ENCODE measurements at regions of chr9 and their contacts with region 1.

Region 1: DNA sequence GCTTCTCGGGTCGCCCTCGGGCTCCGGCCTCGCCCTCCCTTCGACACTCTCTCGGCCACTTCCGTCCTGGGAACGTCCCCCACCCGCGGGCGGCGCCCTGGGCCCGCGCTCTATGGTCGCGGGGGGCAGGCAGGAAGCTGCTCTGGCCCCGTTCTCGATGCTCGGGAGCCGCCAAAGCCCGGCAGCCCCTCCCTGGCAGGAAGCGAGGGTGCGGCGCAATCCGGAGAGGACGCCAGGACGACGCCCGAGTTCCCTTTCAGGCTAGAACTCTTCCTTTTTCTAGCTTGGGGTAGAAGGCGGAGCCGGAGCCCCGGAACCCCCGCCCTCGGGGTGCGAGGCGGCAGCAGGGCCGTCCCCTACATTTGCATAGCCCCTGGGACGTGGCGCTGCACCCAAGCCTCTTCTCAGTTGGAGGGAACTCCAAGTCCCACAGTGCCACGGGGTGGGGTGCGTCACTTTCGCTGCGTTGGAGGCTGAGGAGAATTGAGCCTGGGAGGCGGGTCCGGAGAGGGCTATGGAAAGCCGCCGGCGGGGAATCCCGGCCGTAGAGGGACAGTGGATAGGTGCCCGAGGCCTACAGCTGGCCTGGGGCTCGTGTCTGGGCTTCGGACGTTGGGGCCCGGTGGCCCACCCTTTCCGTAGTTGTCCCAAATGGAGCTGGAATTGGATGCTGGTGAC is at the starts of genes CREB3 and TLN1:
- DNase-seq: peak; percentile 94
- H3K4me3 Mint-ChIP-seq: no peak within 1 kb of the TSS
- H3K27ac Mint-ChIP-seq: no peak within 1 kb of the TSS
- H3K4me1 Mint-ChIP-seq: no peaks in the 10 kb centered on the region
- H3K27me3 Mint-ChIP-seq: no peaks in the 10 kb centered on the region
- CTCF ChIP-seq: no peak
- total RNA-seq, gene CREB3: 26.5 and 29.4 TPM in 2 replicates
- total RNA-seq, gene TLN1: 91.1 and 98.7 TPM in 2 replicates

Region 2: DNA sequence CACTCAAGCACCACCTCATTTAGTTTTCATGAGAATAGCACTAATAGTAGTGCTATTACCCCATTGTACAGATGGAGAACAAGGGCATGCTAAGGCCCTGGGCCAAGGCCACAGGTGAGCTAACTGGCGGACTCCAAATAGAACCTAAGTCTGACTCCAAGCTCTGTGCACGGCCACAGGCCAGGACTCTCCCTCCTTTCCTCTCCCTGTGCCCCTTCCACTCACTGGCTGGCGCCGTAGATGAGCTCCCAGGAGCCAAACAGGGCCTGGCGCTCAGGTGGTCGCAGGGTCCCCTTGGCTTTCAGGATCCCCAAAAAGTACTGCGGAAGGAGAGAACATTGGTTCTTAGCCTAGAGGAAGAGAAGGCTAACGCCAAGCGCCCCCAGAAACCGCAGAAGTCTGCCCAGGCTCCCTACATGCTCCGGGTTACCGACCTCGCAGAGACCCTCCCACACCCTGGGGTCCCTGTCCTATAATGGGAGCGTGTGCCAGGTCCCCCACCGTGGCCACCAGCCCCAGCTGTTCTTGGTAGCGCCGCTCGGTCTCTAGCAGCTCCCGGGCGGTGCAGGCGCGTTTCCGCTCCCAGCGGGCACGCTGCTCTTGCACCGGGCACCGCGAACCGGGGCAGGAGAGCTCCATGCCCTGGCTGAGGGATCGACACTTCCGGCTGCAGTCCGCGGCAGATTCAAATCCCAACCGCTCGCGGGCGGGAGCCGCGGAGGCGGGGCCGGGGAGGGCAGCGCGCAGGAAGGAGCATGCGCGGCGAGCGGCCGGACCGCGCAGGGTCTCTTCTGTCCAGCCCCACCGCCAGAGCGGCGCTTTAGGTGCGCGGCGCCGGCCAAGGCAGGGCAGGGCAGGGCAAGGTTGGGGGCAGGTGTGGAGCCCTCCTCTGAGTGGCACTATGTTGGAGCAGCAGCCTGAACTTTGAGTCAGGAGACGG is 67.5 kb before region 1 on chr9 and contains the start of gene ARHGEF39:
- CTCF ChIA-PET with region 1: interaction called, 6 read pairs
- intact Hi-C with region 1: loop called (anchors 10 kb)
- DNase-seq: peak; percentile 84
- H3K4me3 Mint-ChIP-seq: peak within 1 kb of the TSS; percentile 81
- H3K27ac Mint-ChIP-seq: peak within 1 kb of the TSS; percentile 20
- H3K4me1 Mint-ChIP-seq: peaks cover 47% of the 10 kb centered on the region
- H3K27me3 Mint-ChIP-seq: no peaks in the 10 kb centered on the region
- CTCF ChIP-seq: no peak
- total RNA-seq, gene ARHGEF39: 14.2 and 15.4 TPM in 2 replicates

Region 3: GRCh38 chr9:35790385-35791296 is 58.4 kb after region 1 on chr9:
- CTCF ChIA-PET with region 1: no interaction called
- intact Hi-C with region 1: loop called (anchors 1 kb)
- DNase-seq: peak; percentile 48
- H3K4me3 Mint-ChIP-seq: no peak overlapping the region
- H3K27ac Mint-ChIP-seq: no peak overlapping the region
- H3K4me1 Mint-ChIP-seq: peaks cover 14% of the 10 kb centered on the region
- H3K27me3 Mint-ChIP-seq: no peaks in the 10 kb centered on the region
- CTCF ChIP-seq: no peak

Region 4: GRCh38 chr9:35814841-35815543 is 82.7 kb after region 1 on chr9 and contains the start of gene HINT2:
- CTCF ChIA-PET with region 1: interaction called, 3 read pairs
- intact Hi-C with region 1: loop called (anchors 10 kb)
- DNase-seq: peak; percentile 95
- H3K4me3 Mint-ChIP-seq: peak within 1 kb of the TSS; percentile 75
- H3K27ac Mint-ChIP-seq: peak within 1 kb of the TSS; percentile 67
- H3K4me1 Mint-ChIP-seq: peaks cover 8% of the 10 kb centered on the region
- H3K27me3 Mint-ChIP-seq: peaks cover 21% of the 10 kb centered on the region
- CTCF ChIP-seq: no peak
- total RNA-seq, gene HINT2: 33.9 and 39.7 TPM in 2 replicates